Left cardiac atrium (tissue), 4 donors: ENCODE measurements at regions of chr12 and their contacts with region 1.

Region 1: DNA sequence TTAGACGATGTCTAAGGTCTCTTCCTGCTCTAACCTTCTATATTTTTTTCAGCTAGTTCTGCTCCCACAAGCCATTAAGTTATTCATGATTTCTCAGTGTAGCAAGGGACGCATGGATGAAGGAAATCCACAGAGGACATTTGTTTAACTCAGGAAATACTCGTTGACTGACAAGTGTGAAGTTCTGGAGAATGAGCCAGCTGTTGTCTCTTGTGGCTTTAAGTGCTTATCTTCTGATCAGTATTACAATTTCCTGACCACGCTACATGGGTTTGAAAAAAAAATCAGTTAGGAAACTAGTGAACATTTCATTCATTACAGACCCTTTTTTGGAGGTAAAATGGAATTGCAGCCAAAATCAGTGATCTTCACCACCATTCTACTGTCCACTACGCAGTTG is 53.1 kb downstream of the GUCY2C start:
- DNase-seq: no peak
- ATAC-seq: no peak

Region 2: DNA sequence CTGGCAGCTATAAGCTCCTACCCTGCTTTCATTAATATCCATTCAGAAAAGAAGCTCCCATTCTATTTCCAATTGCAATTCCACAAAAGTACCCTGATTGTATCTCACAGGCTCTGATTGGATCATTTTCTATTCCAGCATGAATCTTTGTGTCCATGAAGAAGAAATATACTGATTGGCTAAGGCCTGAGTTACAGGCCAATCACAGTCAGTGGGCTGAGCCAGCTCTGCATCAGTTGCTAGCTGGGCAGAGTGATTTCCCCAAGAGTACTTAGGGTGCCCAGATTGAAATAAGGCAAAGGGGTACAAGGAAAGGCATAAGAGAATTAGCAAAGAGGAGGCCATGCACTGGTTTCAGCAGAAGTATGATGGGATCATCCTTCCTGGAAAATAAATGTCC is 185.6 kb after region 1 on chr12:
- intact Hi-C with region 1: no loop called
- DNase-seq: no peak
- ATAC-seq: peak; percentile 37 to 59

Region 3: GRCh38 chr12:15001733-15002382 is 358.6 kb after region 1 on chr12:
- intact Hi-C with region 1: loop called in 1 of 2 experiments (anchors 10 kb)
- DNase-seq: peak; percentile 46
- ATAC-seq: peak; percentile 91 to 95